ENCODE measurements at regions of chr7 and their contacts with region 1.

Region 1: DNA sequence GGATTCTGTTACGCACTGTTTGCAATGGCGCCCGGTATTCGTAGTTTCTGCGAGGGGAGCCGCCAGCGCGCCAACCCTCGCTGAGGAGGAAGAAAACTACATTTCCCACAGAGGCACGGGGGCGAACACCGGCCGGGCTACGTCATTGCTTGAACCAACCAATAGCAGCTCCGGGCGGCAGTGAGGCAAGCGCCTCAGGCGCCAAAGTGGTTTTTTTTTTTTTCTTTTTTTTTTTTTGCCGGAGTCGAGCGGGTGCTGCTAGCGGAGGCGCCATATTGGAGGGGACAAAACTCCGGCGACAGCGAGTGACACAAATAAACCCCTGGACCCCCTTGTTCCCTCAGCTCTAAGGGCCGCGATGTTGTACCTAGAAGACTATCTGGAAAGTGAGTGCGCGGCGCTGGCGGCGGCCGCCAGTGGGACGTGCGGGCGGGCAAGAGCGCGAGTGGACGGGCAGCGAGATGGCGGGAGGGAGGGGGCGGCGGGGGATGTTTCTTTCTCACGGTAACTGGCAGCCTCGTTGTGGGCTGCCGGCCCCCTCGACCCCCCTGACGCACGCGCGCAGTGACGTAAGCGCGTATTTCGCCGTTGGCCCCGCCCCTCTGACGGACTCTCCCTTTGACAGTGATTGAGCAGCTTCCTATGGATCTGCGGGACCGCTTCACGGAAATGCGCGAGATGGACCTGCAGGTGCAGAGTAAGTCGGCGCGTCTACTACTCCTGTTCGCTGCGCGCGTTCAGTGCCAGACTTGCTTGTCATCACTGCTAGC is at the start of gene ING3:
- DNase-seq: peak; percentile 95
- ATAC-seq: peak; percentile 97
- H3K4me3 ChIP-seq: peak within 1 kb of the TSS; percentile 69 to 91 (median 78)
- H3K27ac ChIP-seq: peak within 1 kb of the TSS; percentile 98
- H3K4me1 ChIP-seq: peaks cover 19% of the 10 kb centered on the region
- H3K27me3 ChIP-seq: no peaks in the 10 kb centered on the region
- CTCF ChIP-seq: no peak
- EP300 ChIP-seq: no peak
- POLR2A ChIP-seq: peak; percentile 55 to 75
- RAD21 ChIP-seq: no peak
- total RNA-seq, gene ING3: 12.8 and 17.3 TPM in 2 replicates

Region 2: DNA sequence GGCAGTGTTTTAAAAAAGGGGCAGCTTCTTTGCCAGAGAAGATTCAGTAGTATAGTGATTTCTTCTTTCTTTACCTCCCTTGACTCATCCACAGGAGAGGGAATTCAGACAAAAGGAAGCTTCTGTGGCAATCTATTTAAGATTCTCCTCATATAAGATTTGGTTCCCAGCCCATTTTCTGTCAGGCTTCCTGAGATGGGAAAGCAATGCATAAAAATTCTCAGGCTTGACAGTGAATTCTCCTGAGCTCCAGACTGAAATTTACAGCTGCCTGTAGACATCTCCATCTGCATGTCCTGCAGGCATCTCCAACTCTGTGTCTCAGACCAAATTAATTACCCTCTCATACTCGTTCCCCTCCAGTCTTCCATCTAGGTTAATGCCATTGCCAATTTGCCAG is 165.6 kb before region 1 on chr7:
- CTCF ChIA-PET with region 1: no interaction called
- POLR2A ChIA-PET with region 1: no interaction called
- in situ Hi-C with region 1: no loop called
- intact Hi-C with region 1: no loop called
- DNase-seq: no peak
- ATAC-seq: no peak
- H3K4me3 ChIP-seq: no peak overlapping the region
- H3K27ac ChIP-seq: no peak overlapping the region
- H3K4me1 ChIP-seq: no peaks in the 10 kb centered on the region
- H3K27me3 ChIP-seq: peaks cover 0 to 6% of the 10 kb centered on the region in 2 experiments; a peak in 1 of 5 replicates
- CTCF ChIP-seq: no peak
- EP300 ChIP-seq: no peak
- POLR2A ChIP-seq: no peak
- RAD21 ChIP-seq: no peak

Region 3: DNA sequence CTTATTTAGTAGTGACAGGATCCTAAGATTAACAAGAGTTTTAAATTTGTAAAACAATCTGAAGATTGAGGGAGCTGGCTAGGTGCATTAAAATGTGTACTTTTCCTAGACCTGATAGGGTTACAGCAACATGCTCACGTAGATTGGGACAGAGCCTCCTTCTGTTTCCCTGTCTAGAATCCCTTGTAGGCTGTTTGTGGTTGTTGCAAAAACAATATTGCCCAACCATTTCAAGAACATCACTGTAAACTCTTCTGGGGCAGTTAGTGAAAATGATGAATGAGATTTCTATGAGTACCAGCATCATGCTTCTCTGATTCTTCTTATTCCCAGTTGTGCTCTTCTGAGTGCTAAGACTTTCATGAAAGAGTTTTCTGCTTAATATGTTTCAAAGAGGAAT is 23.1 kb after region 1 on chr7:
- CTCF ChIA-PET with region 1: no interaction called
- POLR2A ChIA-PET with region 1: no interaction called
- in situ Hi-C with region 1: no loop called
- intact Hi-C with region 1: no loop called
- DNase-seq: no peak
- ATAC-seq: no peak
- H3K4me3 ChIP-seq: no peak overlapping the region
- H3K27ac ChIP-seq: no peak overlapping the region
- H3K4me1 ChIP-seq: no peaks in the 10 kb centered on the region
- H3K27me3 ChIP-seq: no peaks in the 10 kb centered on the region
- CTCF ChIP-seq: no peak
- EP300 ChIP-seq: no peak
- POLR2A ChIP-seq: no peak
- RAD21 ChIP-seq: no peak

Region 4: GRCh38 chr7:122689346-122690109 is 1738.8 kb after region 1 on chr7:
- CTCF ChIA-PET with region 1: no interaction called
- POLR2A ChIA-PET with region 1: no interaction called
- in situ Hi-C with region 1: no loop called
- intact Hi-C with region 1: loop called (anchors 10 kb)
- DNase-seq: peak; percentile 27
- ATAC-seq: peak; percentile 62
- H3K4me3 ChIP-seq: no peak overlapping the region
- H3K27ac ChIP-seq: no peak overlapping the region
- H3K4me1 ChIP-seq: peaks cover 31% of the 10 kb centered on the region
- H3K27me3 ChIP-seq: no peaks in the 10 kb centered on the region
- CTCF ChIP-seq: peak; percentile 33
- EP300 ChIP-seq: no peak
- POLR2A ChIP-seq: no peak
- RAD21 ChIP-seq: peak; percentile 29; the same call in 1 of the 2 replicates

Measured in HepG2 (cell line).